ENCODE measurements at regions of chr6 and their contacts with region 1.

Region 1: GRCh38 chr6:118651282-118652050 is at the start of gene CEP85L:
- H3K4me3 Mint-ChIP-seq: peak within 1 kb of the TSS; percentile 90
- H3K27ac Mint-ChIP-seq: peak within 1 kb of the TSS; percentile 90
- H3K4me1 Mint-ChIP-seq: peaks cover 14% of the 10 kb centered on the region
- H3K27me3 Mint-ChIP-seq: peaks cover 7% of the 10 kb centered on the region

Region 2: DNA sequence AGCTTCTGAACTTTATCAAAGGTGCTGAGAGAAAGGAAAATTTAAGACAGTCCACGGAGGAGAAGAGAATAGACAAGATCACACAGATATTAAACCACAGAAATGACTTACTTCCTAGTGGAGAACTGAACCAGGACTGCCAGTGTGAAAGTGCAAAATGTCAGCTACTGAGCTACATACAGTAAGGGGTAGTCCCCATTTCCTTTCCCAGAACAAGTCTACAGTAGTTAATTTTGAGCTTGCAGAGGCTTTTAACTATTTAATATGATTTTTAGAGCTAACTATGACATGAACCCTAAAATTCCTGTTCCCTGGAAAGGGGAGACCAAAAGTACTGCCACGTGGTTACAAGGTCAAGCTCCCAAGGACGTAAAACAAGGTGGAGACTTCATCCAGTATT is 45.2 kb before region 1 on chr6:
- intact Hi-C with region 1: no loop called
- H3K4me3 Mint-ChIP-seq: no peak overlapping the region
- H3K27ac Mint-ChIP-seq: no peak overlapping the region
- H3K4me1 Mint-ChIP-seq: peaks cover 26% of the 10 kb centered on the region
- H3K27me3 Mint-ChIP-seq: no peaks in the 10 kb centered on the region

Region 3: GRCh38 chr6:118776607-118777549 is 125.4 kb after region 1 on chr6:
- intact Hi-C with region 1: loop called (anchors 5 kb)
- H3K4me3 Mint-ChIP-seq: no peak overlapping the region
- H3K27ac Mint-ChIP-seq: no peak overlapping the region
- H3K4me1 Mint-ChIP-seq: peaks cover 32% of the 10 kb centered on the region
- H3K27me3 Mint-ChIP-seq: no peaks in the 10 kb centered on the region

Region 4: DNA sequence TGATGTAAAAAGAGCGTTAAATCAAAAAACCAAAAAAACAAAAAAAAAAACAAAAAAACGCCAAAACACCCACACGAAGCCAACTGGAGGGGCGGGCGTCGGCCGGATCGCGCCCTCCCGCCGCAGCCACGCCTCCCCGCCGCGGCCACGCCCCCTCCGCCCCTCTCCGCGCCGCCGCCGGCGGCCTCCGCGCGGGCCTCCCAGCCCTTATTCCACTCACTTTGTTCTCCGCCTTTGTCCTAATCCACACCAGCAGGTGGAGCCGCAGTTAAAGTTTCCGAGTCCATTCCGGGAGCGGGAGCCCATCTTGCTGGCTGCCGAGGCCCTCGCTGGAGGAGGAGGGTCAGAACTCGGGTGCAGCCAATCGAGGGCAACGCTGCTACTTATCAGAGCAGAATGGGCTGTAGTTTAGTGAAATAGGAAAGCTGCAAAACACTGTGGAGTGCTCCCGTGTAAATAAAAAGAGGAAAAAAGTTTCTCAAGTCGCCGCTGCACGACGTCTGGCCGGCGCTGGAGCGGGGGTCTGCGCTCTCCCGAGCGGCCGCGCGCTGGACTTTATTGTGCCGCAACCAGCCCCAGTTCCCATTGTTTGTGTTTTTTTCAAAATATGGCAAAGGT is 242.4 kb after region 1 on chr6 and contains the start of gene ASF1A:
- intact Hi-C with region 1: loop called (anchors 5 kb)
- H3K4me3 Mint-ChIP-seq: peak within 1 kb of the TSS; percentile 88
- H3K27ac Mint-ChIP-seq: peak within 1 kb of the TSS; percentile 96
- H3K4me1 Mint-ChIP-seq: peaks cover 45% of the 10 kb centered on the region
- H3K27me3 Mint-ChIP-seq: no peaks in the 10 kb centered on the region

Measured in dendritic cell treated with granulocyte-macrophage colony-stimulating factor and Interleukin-4, amounts not matched to agents 40 ng/mL and 50 ng/mL, for 4 days (primary cell).